HAP-1 (cell line): ENCODE measurements at regions of chr15 and their contacts with region 1.

Region 1: GRCh38 chr15:83559310-83559966 is 94.5 kb upstream of the ADAMTSL3 start:
- DNase-seq: peak; percentile 86 to 88
- H3K4me3 ChIP-seq: no peak overlapping the region
- H3K4me1 ChIP-seq: 0 out of 2 replicates have a peak, but pooled peaks cover 4% of the 10 kb centered on the region
- H3K27me3 ChIP-seq: no peaks in the 10 kb centered on the region

Region 2: DNA sequence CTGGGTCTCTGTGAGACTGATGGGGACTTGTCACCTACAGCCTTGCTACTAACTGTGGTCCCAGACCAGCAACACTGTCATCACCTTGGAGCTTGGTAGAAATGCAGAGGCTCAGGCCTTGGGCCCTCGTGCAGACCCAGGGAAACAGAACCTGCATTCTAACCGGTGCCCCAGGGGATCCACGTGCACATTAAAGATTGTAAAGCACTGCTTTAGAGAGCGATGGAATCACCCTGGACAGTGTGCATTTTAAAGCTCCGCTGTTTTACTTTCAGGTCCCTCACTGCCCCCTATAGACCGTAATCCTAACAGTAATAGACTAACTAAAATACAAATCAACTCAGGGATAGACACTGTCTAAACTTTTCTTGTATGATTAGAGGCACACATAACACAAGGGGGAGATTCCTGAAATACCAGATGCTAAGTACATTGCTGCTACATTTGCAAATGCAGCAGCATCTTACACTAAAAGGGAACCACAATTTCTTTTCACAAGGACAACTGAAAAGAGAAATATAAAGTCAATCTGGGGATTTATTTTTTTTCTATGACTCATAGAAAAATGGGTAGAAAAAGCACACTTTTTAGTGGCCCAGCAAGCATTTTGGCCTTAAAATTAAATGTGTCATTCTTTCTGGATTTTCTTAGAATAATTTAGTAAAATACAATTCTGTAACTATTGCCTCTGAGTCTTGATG is 122.8 kb before region 1 on chr15:
- in situ Hi-C with region 1: loop called (anchors 5 kb)
- DNase-seq: peak; percentile 60 to 86
- H3K4me3 ChIP-seq: no peak overlapping the region
- H3K4me1 ChIP-seq: 0 out of 2 replicates have a peak, but pooled peaks cover 2% of the 10 kb centered on the region
- H3K27me3 ChIP-seq: peaks cover 25% of the 10 kb centered on the region

Region 3: GRCh38 chr15:83657549-83657948 is 98.1 kb after region 1 on chr15:
- in situ Hi-C with region 1: no loop called
- DNase-seq: peak in 1 of 2 experiments; percentile 36
- H3K4me3 ChIP-seq: no peak overlapping the region
- H3K4me1 ChIP-seq: no peaks in the 10 kb centered on the region
- H3K27me3 ChIP-seq: peaks cover 7% of the 10 kb centered on the region